GM10248 (cell line): ENCODE measurements at regions of chr5 and their contacts with region 1.

Region 1: DNA sequence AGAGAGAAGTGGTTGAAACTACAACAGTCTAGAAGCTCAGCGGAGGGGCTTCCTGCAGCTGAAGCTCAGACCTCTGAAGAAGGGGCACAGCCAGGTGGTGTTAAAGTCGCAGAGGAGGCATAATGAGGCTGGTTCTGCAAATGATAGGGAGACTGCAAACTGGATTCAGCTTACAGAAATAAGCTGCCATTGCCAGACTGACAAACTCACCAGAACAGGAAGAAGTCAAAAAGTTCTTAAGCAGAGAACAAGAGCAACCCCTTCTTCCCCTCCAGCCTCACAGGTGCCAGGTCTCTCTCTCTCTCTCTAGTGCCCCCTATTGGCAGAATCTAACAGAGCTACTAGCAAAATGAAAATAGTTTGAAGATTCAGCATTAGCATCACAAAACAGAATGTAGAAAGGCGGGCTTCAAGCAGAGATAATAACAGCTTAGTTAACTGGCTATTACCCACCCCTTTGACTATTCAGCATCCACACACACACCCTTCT is 76.7 kb downstream of the GRAMD2B start:
- DNase-seq: peak; percentile 37
- CTCF ChIP-seq: peak; percentile 67

Region 2: DNA sequence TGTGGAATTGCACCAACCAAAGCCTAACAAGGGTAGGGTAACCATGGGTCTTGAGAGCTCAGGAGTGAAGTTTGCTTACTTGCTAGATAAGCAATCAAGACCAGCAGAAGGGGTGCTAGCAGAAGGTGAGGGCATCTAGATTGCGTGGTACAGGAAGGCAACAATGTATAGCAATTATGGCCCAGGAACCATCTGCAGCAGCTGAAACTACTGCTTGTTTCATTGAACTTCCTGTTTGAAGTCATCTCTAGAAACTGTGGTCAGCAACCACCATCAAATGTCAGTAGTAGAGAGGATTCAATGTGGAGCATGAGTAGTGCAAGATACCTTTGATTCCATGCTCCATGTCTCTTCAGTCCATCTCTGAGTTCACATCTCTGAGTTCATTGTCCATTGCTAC is 538.7 kb before region 1 on chr5:
- CTCF ChIA-PET with region 1: no interaction called
- POLR2A ChIA-PET with region 1: no interaction called
- DNase-seq: peak; percentile 3
- CTCF ChIP-seq: no peak

Region 3: DNA sequence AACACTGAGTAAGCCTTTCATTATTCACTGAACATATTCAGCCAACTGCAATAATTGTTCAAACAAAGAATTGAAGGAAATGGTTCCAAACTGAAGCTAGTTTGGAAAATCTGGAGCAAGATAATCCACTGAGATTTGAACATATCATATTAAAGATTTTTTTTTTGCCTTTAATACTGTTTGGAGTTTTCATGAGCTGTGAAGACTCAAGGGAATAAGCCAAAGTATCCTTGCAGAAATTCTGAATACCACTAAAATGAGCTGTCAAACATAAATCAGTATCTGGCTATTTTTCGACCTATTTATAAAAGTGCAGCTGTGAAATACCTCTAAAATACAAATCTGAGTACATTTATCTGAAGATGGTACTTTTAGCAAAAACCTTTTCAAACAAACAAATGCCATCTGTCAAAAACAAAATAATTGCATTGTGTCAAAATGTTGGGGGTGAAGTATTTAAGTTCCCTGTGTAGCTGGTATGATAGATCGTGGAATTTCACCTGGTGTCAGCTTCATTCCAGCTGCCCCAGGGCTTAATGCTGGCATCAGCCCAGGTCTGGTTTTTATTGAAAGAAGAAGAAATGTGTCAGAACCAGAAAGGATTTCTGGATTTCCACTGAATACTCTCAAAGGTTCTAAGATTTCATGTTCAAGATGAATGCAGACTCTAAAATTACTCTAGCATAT is 225.7 kb before region 1 on chr5:
- CTCF ChIA-PET with region 1: no interaction called
- POLR2A ChIA-PET with region 1: no interaction called
- DNase-seq: no peak
- CTCF ChIP-seq: no peak

Region 4: DNA sequence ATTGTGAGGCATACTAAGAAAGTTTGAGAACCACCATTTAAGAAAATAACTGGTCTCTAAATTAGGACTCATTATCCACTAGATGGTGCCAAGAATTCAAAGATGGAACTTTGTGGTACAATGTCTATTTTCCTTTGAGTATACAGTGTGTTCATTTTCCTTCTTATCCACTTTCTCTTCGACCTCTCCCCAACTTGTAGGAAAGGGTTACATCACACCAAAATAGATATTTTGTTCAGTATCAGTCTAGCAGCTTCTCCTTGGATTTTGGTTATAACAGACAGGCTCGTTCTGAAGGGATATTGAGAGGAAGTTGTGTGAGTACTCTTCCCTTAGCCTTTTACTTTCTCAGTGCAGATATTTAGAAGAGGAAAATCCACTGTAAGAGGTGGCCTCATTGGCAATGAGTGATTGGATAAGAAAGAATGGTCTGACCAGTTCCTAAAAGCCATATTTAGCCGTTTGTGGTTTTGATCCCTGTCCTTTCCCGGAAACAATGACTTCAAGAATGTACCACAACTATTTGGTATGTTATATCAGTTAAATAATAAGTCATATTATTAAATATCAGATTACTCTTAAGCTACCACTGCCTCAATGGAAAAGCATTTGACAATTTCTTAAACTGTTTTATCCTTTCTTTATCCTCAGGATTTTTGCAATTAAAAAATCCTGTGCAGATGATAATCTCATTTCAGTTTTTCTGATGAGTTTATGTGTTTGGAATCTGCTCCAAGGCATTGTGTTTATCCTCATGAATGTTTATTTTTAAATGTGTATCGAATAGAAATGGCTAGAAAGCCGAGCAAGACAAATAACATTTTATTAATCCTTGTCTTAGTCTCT is 145.7 kb before region 1 on chr5:
- CTCF ChIA-PET with region 1: interaction called, 44 read pairs
- POLR2A ChIA-PET with region 1: no interaction called
- DNase-seq: peak; percentile 59
- CTCF ChIP-seq: peak; percentile 53

Region 5: GRCh38 chr5:126483156-126483555 is 16.7 kb before region 1 on chr5:
- CTCF ChIA-PET with region 1: interaction called, 79 read pairs
- POLR2A ChIA-PET with region 1: no interaction called
- DNase-seq: no peak
- CTCF ChIP-seq: no peak

Region 6: GRCh38 chr5:126519634-126520592 is 20.0 kb after region 1 on chr5:
- CTCF ChIA-PET with region 1: interaction called, 12 read pairs
- POLR2A ChIA-PET with region 1: no interaction called
- DNase-seq: no peak
- CTCF ChIP-seq: no peak

Region 7: DNA sequence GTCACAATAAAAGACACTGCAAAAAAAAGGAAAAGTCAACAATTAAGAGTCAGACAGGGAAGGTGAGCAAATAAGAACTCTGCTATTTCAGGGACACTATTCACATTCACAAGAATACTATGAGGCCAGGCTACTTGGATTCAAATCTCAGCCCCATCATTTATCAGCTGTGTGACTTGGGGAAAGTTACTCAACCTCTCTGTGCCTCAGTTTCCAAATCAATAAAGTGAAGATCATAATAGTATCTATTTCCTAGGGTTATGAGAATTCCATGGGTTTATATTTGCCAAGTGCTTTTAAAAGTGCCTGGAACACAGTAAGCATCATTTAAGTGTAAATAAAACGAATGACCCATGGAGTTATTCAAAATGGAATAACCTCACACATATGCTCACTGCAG is 38.7 kb after region 1 on chr5:
- CTCF ChIA-PET with region 1: interaction called, 20 read pairs
- POLR2A ChIA-PET with region 1: no interaction called
- DNase-seq: no peak
- CTCF ChIP-seq: no peak

Region 8: DNA sequence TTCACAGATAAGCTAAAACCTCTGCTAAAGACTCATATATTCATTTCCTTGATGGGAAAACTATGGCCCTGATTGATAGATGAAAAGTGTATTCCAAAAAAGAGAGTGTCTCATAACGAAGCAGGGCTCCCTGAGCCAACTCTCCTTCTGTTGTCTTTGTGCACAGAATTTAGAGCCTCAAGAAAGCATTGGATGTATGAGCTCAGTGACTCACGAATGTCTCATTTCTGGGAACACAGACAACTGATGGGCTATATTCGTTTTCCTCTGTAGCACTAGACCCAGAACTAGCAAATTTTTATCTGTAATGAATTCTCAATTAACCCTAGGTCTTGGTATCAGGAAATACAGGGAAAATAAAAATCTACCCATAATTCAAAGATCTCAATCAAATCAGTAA is 365.4 kb after region 1 on chr5:
- CTCF ChIA-PET with region 1: no interaction called
- POLR2A ChIA-PET with region 1: no interaction called
- DNase-seq: no peak
- CTCF ChIP-seq: no peak